GM12878 (cell line): ENCODE measurements at regions of chr6 and their contacts with region 1.

Region 1: DNA sequence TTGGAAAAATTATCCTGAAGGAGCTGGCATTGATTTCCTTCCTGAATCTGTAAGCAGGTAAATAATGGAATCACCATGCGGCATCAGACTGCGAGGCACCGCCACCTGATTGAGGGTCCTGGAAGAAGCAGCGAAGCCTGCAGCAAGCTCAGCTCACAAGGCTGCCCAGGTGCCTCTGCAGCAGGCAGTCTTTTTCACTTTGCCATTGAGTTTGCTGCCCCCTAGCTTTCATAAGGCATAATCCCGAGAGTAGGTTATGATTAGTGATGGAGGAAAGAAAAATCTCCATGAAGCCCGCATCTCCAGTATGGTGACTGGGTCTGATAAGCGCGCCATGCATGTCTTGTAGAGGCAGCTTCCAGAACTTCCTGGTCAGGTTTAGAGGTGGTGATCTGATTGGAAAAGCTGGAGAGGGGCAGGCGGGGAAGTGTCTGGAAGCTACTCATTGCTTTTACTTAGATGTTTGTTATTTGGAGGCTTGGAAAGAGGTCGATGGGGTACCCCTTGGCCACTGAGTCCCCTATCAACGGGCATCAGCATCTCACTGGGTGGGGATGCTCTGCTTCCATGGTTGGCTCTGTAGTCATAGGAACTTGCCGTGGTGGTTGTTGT is 26.7 kb downstream of the IYD start:
- DNase-seq: no peak
- ATAC-seq: peak; percentile 98
- H3K4me3 ChIP-seq: no peak overlapping the region
- H3K27ac ChIP-seq: no peak overlapping the region
- H3K4me1 ChIP-seq: no peaks in the 10 kb centered on the region
- H3K27me3 ChIP-seq: no peaks in the 10 kb centered on the region; a peak in 2 of 4 replicates
- CTCF ChIP-seq: peak; percentile 71 to 77 (median 71)
- EP300 ChIP-seq: no peak
- POLR2A ChIP-seq: no peak
- RAD21 ChIP-seq: peak; percentile 76

Region 2: GRCh38 chr6:149934249-149935156 is 461.0 kb before region 1 on chr6:
- CTCF ChIA-PET with region 1: interaction called, 4 read pairs
- POLR2A ChIA-PET with region 1: no interaction called
- RAD21 ChIA-PET with region 1: no interaction called
- SMC1A ChIA-PET with region 1: no interaction called
- in situ Hi-C with region 1: no loop called
- intact Hi-C with region 1: loop called (anchors 1 kb)
- DNase-seq: peak; percentile 34
- ATAC-seq: peak; percentile 34
- H3K4me3 ChIP-seq: no peak overlapping the region
- H3K27ac ChIP-seq: no peak overlapping the region
- H3K4me1 ChIP-seq: peaks cover 14% of the 10 kb centered on the region
- H3K27me3 ChIP-seq: peaks cover 4 to 8% of the 10 kb centered on the region in 2 experiments
- CTCF ChIP-seq: peak; percentile 61 to 78 (median 77)
- EP300 ChIP-seq: no peak
- POLR2A ChIP-seq: no peak
- RAD21 ChIP-seq: peak; percentile 86

Region 3: GRCh38 chr6:150079604-150080003 is 315.9 kb before region 1 on chr6:
- CTCF ChIA-PET with region 1: interaction called, 115 read pairs
- POLR2A ChIA-PET with region 1: no interaction called
- RAD21 ChIA-PET with region 1: interaction called, 53 read pairs
- SMC1A ChIA-PET with region 1: interaction called, 59 read pairs
- in situ Hi-C with region 1: loop called (anchors 10 kb)
- intact Hi-C with region 1: loop called (anchors 1 kb)
- DNase-seq: no peak
- ATAC-seq: peak; percentile 30; the same call in 2 of the 3 replicates
- H3K4me3 ChIP-seq: no peak overlapping the region
- H3K27ac ChIP-seq: no peak overlapping the region
- H3K4me1 ChIP-seq: no peaks in the 10 kb centered on the region
- H3K27me3 ChIP-seq: no peaks in the 10 kb centered on the region; a peak in 1 of 4 replicates
- CTCF ChIP-seq: no peak
- EP300 ChIP-seq: no peak
- POLR2A ChIP-seq: no peak
- RAD21 ChIP-seq: no peak

Region 4: DNA sequence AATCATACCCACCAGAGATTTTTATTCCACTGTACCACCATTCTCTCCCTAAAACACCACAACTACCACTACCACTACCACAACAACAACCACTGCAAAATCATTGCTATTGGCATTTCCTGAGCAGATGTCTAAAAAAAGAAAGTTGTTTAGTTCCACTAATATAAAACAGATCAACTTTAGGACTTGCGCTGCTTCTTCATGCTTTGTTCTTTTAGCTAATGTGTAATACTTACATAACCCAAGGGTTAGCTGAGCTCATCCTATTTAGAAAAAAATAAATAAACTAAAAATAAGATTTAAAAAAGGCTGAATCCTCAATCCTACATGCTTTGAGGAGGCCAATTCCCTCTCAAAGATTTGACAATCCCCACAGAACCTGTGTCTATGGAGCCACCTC is 15.2 kb before region 1 on chr6:
- CTCF ChIA-PET with region 1: interaction called, 21 read pairs
- POLR2A ChIA-PET with region 1: interaction called, 3 read pairs
- RAD21 ChIA-PET with region 1: no interaction called
- SMC1A ChIA-PET with region 1: interaction called, 28 read pairs
- in situ Hi-C with region 1: no loop called
- intact Hi-C with region 1: no loop called
- DNase-seq: no peak
- ATAC-seq: no peak
- H3K4me3 ChIP-seq: no peak overlapping the region
- H3K27ac ChIP-seq: no peak overlapping the region
- H3K4me1 ChIP-seq: no peaks in the 10 kb centered on the region
- H3K27me3 ChIP-seq: peaks cover 0 to 4% of the 10 kb centered on the region in 2 experiments; a peak in 2 of 4 replicates
- CTCF ChIP-seq: no peak
- EP300 ChIP-seq: no peak
- POLR2A ChIP-seq: no peak
- RAD21 ChIP-seq: no peak

Region 5: DNA sequence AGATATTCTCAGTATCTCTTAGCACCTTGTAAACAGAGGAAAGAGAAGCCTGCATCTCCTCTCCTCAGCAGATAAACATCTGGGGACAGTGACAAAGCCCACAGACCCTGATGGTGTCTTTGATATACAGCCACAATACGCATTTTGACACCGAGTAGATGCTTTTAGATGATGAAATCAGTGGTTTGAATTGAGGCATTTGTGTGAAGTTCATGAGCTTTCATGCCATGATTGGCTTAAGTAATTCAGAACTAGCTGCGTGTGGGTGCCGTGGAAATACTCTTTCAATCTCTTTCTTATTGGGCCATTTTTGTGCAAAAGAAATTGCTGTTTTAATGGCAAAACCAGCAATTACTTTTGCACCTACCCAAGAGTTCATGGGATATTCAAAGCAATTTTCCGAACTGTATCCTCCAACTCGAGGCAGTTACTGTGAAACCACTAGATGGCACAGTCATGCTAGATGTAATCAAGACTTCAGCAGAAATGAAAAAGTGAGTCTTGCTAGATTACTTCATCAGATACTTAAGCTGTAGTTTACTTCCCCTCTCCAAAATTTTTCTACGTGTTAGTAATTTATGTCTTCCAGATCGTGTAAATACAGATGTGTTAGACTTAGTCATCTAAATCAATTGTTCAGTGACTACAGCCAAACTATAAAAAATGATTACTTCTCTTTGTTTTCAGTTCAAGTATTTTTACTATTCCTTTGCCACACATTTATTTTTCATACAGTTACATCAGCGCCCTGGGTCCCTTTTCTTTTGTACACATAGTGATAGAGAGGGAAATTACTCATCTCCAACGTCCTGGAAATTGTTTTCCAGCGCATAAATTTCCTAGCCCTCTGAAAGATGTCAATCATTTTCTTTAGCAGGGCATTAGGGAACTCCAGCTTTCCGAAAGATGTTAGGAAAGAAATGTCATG is 22.7 kb after region 1 on chr6:
- CTCF ChIA-PET with region 1: interaction called, 19 read pairs
- POLR2A ChIA-PET with region 1: no interaction called
- RAD21 ChIA-PET with region 1: interaction called, 3 read pairs
- SMC1A ChIA-PET with region 1: interaction called, 6 read pairs
- in situ Hi-C with region 1: no loop called
- intact Hi-C with region 1: no loop called
- DNase-seq: peak; percentile 40
- ATAC-seq: peak; percentile 95
- H3K4me3 ChIP-seq: peak overlapping the region; percentile 57; the same call in 1 of the 2 replicates
- H3K27ac ChIP-seq: no peak overlapping the region
- H3K4me1 ChIP-seq: no peaks in the 10 kb centered on the region
- H3K27me3 ChIP-seq: no peaks in the 10 kb centered on the region; a peak in 1 of 4 replicates
- CTCF ChIP-seq: peak; percentile 77 to 88 (median 80)
- EP300 ChIP-seq: no peak
- POLR2A ChIP-seq: no peak
- RAD21 ChIP-seq: peak; percentile 90